ENCODE measurements at regions of chr4 and their contacts with region 1.

Region 1: DNA sequence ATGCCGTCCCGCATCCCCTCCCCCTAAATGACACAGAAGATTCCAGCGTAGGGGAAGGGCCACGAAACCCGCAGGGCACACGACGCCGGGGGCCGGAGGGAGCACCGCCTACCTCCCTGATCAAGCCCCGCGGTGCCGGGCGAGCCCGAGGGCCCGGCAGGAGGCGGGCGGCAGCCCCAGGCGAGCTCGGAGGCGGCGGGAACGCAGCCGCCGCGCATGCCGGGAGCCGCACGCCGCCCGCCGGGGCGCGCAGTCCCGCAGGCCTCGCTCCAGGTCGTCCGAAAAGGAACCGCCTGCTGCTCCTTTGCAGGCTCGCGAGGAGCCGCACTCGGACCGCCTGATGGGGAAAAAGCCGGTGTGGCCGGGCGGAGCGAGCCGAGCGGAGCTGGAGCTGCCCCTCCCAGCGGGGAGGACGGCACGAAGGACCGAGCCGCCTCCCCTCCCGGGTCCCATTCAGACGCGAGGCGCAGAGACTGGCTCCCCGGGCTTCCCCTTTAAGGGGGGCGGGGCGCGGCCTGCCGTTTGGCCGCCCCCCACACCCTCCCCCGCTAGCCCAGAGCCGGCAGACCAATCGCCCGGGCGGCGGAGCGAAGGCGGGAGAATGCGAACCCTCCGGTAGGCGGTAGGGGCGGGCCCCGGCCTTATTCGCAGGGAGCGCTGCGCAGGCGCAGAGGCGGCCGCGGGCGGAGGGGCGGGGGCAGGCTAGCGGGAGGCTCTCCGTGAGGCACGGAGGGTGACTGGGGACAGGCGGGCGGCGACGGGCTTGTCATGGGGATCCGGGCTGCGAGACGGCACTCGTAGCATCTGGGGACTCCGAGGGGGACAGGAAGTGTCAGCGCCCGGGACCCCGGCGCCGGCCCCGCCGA is 561 bp upstream of the ING2 start:
- DNase-seq: peak; percentile 100
- H3K4me3 Mint-ChIP-seq: peak overlapping the region; percentile 92
- H3K27ac Mint-ChIP-seq: peak overlapping the region; percentile 97
- H3K4me1 Mint-ChIP-seq: peaks cover 23% of the 10 kb centered on the region
- H3K27me3 Mint-ChIP-seq: no peaks in the 10 kb centered on the region

Region 2: DNA sequence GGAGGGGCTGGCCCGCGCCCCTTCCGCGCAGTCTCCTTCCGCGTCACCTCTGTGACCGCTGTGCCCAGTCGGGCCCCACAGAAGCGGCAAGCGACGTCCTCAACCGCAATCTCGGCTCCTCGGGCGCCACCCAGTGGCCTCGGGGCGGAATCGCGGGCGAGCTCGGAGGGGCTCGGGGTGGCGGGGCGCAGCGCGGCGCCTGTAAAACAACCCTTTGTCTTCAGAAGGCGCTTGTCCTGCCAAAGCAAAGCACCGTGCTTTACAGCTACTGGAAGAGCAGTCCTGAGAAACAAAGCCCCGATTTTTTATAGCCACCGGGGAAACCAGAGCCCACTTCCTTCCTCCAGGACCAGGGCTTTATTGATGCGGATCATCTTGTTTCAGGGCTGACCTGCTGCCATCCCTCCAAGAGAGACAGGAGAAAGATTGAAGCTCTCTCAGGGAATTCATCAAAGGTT is 97.1 kb before region 1 on chr4:
- intact Hi-C with region 1: loop called (anchors 2 kb)
- DNase-seq: peak; percentile 82
- H3K4me3 Mint-ChIP-seq: peak overlapping the region; percentile 81
- H3K27ac Mint-ChIP-seq: no peak overlapping the region
- H3K4me1 Mint-ChIP-seq: peaks cover 8% of the 10 kb centered on the region
- H3K27me3 Mint-ChIP-seq: peaks cover 10% of the 10 kb centered on the region

Region 3: GRCh38 chr4:183471946-183472708 is 32.2 kb before region 1 on chr4:
- intact Hi-C with region 1: loop called (anchors 1 kb)
- DNase-seq: peak; percentile 56
- H3K4me3 Mint-ChIP-seq: no peak overlapping the region
- H3K27ac Mint-ChIP-seq: no peak overlapping the region
- H3K4me1 Mint-ChIP-seq: peaks cover 6% of the 10 kb centered on the region
- H3K27me3 Mint-ChIP-seq: peaks cover 5% of the 10 kb centered on the region

Region 4: GRCh38 chr4:183602557-183603027 is 98.3 kb after region 1 on chr4:
- intact Hi-C with region 1: no loop called
- DNase-seq: no peak
- H3K4me3 Mint-ChIP-seq: no peak overlapping the region
- H3K27ac Mint-ChIP-seq: no peak overlapping the region
- H3K4me1 Mint-ChIP-seq: no peaks in the 10 kb centered on the region
- H3K27me3 Mint-ChIP-seq: peaks cover 8% of the 10 kb centered on the region

Region 5: GRCh38 chr4:183659029-183659871 is 155.0 kb after region 1 on chr4 and contains the starts of genes RWDD4 and TRAPPC11:
- intact Hi-C with region 1: loop called (anchors 1 kb)
- DNase-seq: peak; percentile 95
- H3K4me3 Mint-ChIP-seq: peak within 1 kb of the TSS; percentile 100
- H3K27ac Mint-ChIP-seq: peak within 1 kb of the TSS; percentile 96
- H3K4me1 Mint-ChIP-seq: peaks cover 32% of the 10 kb centered on the region
- H3K27me3 Mint-ChIP-seq: no peaks in the 10 kb centered on the region
- total RNA-seq, gene RWDD4: 23.9 and 24.2 TPM in 2 replicates
- total RNA-seq, gene TRAPPC11: 23.0 and 33.7 TPM in 2 replicates

Region 6: DNA sequence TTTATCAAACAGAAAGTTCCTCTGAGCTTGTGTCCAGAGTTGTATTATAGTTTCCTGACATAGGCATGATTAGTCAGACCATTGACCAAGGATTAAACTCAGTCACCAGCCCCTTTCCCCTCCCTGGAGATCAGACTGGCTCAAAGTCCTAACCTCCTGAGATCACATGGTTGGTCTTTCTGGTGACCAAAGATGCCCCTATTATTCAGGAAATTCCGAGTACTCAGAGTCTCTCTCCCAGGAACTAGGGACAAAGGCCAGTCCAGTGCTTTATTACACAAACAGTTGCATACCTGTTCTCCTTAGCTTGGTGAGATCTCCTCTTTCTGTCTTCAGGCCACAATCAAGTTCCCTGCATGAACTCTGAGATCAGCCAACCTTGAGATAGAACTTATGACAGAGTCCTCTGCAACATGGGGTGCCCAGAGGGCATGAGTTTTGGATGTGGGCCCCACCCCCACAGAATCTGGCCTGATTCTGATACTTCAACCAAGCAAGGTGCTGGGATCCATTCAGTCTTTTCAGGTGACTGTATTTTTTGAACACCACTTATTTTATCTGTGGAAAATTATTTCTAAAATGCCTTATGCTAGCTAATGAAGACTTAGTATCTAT is 728.0 kb after region 1 on chr4:
- intact Hi-C with region 1: loop called (anchors 1 kb)
- DNase-seq: no peak
- H3K4me3 Mint-ChIP-seq: no peak overlapping the region
- H3K27ac Mint-ChIP-seq: no peak overlapping the region
- H3K4me1 Mint-ChIP-seq: peaks cover 93% of the 10 kb centered on the region
- H3K27me3 Mint-ChIP-seq: no peaks in the 10 kb centered on the region

Region 7: DNA sequence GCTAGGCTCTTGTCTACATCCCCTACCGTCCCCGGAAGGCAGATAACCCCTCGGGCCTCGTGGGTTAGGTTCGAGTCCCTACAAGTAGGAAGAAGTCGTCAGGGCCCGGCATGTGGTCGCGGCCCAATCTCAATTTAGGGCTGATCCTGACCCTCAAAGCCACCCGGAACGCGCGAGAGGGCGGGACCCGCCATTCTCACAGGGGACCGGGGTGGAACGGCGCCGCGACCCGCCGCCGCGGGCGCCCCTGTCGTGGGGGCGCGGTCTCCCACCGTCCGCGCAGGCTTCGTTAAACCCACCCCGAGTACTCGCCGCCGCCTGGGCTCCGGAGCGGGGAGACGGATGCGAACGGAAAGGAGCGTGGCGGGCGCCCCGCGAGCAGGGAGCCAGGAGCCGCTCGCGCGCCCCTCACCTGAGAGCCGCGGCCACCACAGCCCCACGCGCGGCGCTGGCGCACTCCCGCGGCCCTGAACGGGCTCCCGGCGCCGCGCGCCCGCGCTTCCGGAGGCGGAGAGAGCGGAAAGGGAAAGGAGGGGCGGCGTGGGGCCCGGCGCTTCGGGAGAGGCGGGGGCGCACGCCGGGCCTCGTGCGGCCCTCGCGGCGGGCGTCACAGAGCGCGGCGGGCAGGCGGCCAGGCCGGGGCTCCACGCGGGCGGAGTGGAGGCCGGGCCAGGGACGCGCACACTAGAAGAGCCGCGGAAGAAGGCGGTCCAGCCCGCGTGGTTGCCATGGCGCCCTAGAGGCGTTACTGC is 1699.4 kb after region 1 on chr4 and contains the start of gene CFAP97:
- intact Hi-C with region 1: loop called (anchors 2 kb)
- DNase-seq: peak; percentile 75
- H3K4me3 Mint-ChIP-seq: peak within 1 kb of the TSS; percentile 99
- H3K27ac Mint-ChIP-seq: peak within 1 kb of the TSS; percentile 100
- H3K4me1 Mint-ChIP-seq: peaks cover 36% of the 10 kb centered on the region
- H3K27me3 Mint-ChIP-seq: peaks cover 1% of the 10 kb centered on the region
- total RNA-seq, gene CFAP97: 52.4 and 54.6 TPM in 2 replicates

Region 8: DNA sequence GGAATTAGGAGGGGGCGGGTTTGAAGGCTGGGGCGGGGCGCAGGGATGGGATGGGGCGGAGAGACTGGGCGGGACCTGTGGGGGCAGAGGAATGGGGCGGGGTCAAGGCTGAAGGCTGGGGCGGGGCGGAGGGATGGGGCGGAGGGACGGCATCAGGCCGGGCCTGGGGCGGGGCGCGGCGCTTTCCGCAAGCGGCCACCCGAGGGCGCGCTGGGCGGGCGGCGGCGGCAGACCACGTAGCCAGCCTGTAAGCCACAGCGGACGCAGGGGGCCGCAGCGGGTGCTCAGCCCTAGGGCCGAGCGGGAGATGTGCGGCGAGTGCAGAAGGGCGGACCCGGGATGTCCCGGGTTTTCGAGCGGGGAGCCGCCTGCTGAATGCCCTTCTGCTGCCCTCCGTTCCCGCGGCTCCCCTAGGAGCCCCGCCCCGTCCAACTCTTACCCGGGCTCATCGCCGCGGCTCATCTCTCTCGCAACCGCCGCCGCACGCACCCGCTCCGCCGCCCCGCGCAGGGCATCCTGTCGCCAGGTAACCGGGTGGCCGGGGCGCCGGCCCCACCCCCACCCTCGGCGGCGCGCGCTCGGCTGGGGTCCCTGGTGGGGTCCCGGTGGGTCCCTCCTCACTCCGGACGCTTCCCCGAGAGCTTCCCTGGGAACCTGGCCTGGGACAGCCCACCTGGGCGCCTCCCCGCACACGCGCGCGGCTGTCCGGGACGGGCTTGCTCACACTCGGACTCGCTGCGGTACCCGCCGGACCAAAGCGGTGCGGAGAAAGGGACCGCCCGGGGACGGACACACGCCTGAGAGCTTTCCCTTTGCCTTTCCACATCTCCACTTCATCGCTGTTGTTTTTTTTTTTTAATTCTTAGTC is 1967.2 kb after region 1 on chr4 and contains the start of gene CCDC110:
- intact Hi-C with region 1: loop called (anchors 10 kb)
- DNase-seq: peak; percentile 77
- H3K4me3 Mint-ChIP-seq: peak within 1 kb of the TSS; percentile 89
- H3K27ac Mint-ChIP-seq: peak within 1 kb of the TSS; percentile 47
- H3K4me1 Mint-ChIP-seq: peaks cover 4% of the 10 kb centered on the region
- H3K27me3 Mint-ChIP-seq: peaks cover 52% of the 10 kb centered on the region
- total RNA-seq, gene CCDC110: not detected in 2 replicates